Activated CD4-positive, alpha-beta T cell treated with anti-CD3 and anti-CD28 coated beads, Interleukin-2, amount 10 ng/mL, durations not matched to agents 24 days and 14 days (primary cell): ENCODE measurements at regions of chr5 and their contacts with region 1.

Region 1: GRCh38 chr5:90474235-90475109 is at the starts of genes MBLAC2 and POLR3G:
- DNase-seq: peak; percentile 97
- H3K4me3 Mint-ChIP-seq: peak within 1 kb of the TSS; percentile 98
- H3K27ac Mint-ChIP-seq: peak within 1 kb of the TSS; percentile 97
- H3K4me1 Mint-ChIP-seq: peaks cover 38% of the 10 kb centered on the region
- H3K27me3 Mint-ChIP-seq: no peaks in the 10 kb centered on the region
- total RNA-seq, gene MBLAC2: 6.1 and 6.4 TPM in 2 replicates
- total RNA-seq, gene POLR3G: 22.2 and 25.1 TPM in 2 replicates

Region 2: GRCh38 chr5:90409318-90410177 is 64.9 kb before region 1 on chr5 and contains the start of gene CETN3:
- intact Hi-C with region 1: loop called (anchors 1 kb)
- DNase-seq: peak; percentile 96
- H3K4me3 Mint-ChIP-seq: no peak within 1 kb of the TSS
- H3K27ac Mint-ChIP-seq: no peak within 1 kb of the TSS
- H3K4me1 Mint-ChIP-seq: peaks cover 14% of the 10 kb centered on the region
- H3K27me3 Mint-ChIP-seq: peaks cover 3% of the 10 kb centered on the region
- total RNA-seq, gene CETN3: 39.4 and 40.0 TPM in 2 replicates

Region 3: GRCh38 chr5:90440644-90441043 is 33.8 kb before region 1 on chr5:
- intact Hi-C with region 1: loop called (anchors 1 kb)
- DNase-seq: no peak
- H3K4me3 Mint-ChIP-seq: peak overlapping the region; percentile 83
- H3K27ac Mint-ChIP-seq: no peak overlapping the region
- H3K4me1 Mint-ChIP-seq: peaks cover 9% of the 10 kb centered on the region
- H3K27me3 Mint-ChIP-seq: peaks cover 15% of the 10 kb centered on the region